Dendritic cell treated with granulocyte-macrophage colony-stimulating factor and Interleukin-4, amounts not matched to agents 40 ng/mL and 50 ng/mL, for 4 days (primary cell): ENCODE measurements at regions of chr6 and their contacts with region 1.

Region 1: DNA sequence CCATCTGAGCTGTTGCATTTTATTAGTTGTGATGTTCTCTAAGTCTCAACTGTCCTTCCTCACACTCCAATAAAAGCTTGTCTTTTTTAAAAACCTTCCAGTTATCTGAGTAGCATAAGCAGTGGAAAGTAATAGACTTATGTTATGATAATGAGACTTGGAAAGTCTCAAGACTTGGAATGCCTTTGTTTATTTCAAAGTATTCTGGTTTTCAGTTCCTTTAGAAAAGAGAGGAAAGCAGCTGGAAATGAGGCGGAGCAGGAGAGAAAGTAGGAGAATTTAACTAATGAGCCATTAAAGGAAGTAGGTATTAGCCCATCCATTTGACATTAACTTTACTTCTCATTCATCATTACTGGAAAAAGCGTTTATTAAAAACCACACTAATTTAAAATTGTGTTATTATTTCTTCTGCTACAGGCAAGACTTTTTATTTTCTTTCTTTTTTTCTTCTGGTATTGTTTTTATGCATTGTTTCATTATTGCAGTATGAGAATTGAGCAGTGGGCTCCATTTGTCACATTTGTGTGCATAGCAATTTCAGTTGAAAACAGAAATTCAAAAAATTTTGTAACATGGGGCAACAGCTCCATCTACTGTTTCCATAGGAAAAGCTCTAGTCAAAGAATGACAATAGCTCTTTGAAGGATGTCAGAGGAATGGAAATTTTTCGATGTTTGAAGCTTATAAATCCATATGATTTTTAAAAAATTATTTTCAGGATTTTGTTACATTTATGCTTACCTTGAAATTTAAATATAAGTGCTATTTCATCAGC is 194.8 kb downstream of the COL9A1 start:
- H3K4me3 Mint-ChIP-seq: no peak overlapping the region
- H3K27ac Mint-ChIP-seq: no peak overlapping the region
- H3K4me1 Mint-ChIP-seq: no peaks in the 10 kb centered on the region
- H3K27me3 Mint-ChIP-seq: peaks cover 1% of the 10 kb centered on the region

Region 2: GRCh38 chr6:68876792-68877493 is 1231.1 kb before region 1 on chr6:
- intact Hi-C with region 1: loop called (anchors 5 kb)
- H3K4me3 Mint-ChIP-seq: no peak overlapping the region
- H3K27ac Mint-ChIP-seq: no peak overlapping the region
- H3K4me1 Mint-ChIP-seq: no peaks in the 10 kb centered on the region
- H3K27me3 Mint-ChIP-seq: no peaks in the 10 kb centered on the region

Region 3: GRCh38 chr6:69732640-69733039 is 375.4 kb before region 1 on chr6:
- intact Hi-C with region 1: loop called (anchors 5 kb)
- H3K4me3 Mint-ChIP-seq: no peak overlapping the region
- H3K27ac Mint-ChIP-seq: no peak overlapping the region
- H3K4me1 Mint-ChIP-seq: no peaks in the 10 kb centered on the region
- H3K27me3 Mint-ChIP-seq: no peaks in the 10 kb centered on the region

Region 4: DNA sequence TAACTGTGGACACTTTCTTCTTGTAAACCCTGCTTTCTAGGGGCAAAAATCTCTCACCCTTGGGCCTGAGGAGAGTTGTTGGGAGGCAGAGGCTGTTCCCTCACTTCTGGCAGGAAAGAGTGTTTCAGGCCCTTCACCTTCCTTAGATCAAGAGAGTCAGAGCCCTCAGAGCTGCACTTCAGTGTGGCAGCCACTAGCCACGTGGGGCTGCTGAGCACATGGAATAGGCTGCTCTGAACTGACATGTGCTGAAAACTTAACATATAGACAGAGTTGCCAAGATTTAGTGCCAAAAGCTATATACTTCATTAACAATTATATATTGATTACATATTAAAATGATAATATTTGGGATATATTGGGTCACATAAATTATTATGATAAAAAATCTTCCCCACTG is 306.8 kb before region 1 on chr6:
- intact Hi-C with region 1: no loop called
- H3K4me3 Mint-ChIP-seq: no peak overlapping the region
- H3K27ac Mint-ChIP-seq: no peak overlapping the region
- H3K4me1 Mint-ChIP-seq: peaks cover 11% of the 10 kb centered on the region
- H3K27me3 Mint-ChIP-seq: peaks cover 3% of the 10 kb centered on the region

Region 5: GRCh38 chr6:70072540-70073179 is 35.4 kb before region 1 on chr6:
- intact Hi-C with region 1: no loop called
- H3K4me3 Mint-ChIP-seq: no peak overlapping the region
- H3K27ac Mint-ChIP-seq: no peak overlapping the region
- H3K4me1 Mint-ChIP-seq: no peaks in the 10 kb centered on the region
- H3K27me3 Mint-ChIP-seq: no peaks in the 10 kb centered on the region